GM10248 (cell line): ENCODE measurements at regions of chr2 and their contacts with region 1.

Region 1: DNA sequence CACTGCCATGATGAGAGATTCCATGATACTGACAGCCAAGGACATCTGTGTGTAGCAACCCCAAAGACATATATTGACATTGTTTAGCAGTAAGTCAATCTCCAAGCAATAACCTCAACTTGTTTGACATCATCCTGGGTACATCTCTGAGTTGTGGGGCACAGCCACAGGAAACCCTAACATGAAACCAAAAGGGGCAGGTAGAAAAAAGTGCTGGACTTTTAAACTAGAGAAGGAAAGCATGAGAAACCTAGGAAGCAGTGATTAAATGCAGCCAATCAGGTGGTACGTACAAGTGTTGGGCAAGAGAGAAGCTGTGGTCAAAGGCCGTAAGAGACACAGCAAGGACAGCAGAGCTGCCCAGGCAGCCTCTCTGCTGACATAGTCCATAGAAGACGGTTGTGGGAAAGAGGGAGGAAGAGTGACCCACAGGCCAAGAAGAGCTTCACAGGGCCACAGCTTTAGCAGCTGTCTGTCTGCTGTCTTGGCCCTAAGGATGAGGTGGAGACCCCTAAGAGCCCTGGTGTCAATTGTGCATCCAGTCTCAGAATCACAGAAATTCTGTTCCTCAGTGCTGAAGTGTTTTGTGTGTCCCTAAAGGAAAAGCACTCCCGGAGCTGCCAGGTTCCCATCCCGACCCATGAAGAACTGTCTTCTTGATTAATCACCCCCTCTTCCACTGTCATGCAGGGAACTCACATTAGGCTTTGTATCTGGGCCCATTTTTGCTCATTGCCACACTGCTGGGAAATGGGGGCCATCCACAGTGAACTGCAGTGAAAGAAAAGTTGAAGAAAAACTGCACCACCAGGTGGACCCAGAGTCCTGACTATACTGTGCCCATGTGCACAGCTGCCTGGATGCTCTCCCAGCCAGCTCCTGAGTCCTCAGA is 25.4 kb upstream of the CHN1 start:
- DNase-seq: no peak
- CTCF ChIP-seq: peak; percentile 43

Region 2: DNA sequence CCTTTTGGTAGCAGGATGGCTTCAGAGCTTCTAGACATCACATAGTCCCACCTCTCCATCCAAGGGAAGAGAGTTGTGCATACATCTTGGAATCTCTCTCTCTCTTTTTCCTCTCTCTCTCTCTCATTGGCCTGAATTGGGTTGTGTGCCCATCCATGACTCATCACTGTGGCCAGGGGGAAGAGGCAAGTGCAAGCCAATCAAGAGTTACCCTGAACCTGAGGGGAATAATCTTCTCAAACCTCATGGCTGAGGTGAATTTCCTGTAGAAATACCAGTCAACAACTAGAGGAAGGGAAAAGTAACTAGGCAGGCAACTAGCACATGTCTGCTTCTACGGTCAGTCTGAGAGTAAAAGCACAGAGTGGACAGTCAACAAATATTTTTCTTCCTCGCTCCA is 18.1 kb before region 1 on chr2:
- CTCF ChIA-PET with region 1: no interaction called
- POLR2A ChIA-PET with region 1: no interaction called
- DNase-seq: no peak
- CTCF ChIP-seq: no peak

Region 3: DNA sequence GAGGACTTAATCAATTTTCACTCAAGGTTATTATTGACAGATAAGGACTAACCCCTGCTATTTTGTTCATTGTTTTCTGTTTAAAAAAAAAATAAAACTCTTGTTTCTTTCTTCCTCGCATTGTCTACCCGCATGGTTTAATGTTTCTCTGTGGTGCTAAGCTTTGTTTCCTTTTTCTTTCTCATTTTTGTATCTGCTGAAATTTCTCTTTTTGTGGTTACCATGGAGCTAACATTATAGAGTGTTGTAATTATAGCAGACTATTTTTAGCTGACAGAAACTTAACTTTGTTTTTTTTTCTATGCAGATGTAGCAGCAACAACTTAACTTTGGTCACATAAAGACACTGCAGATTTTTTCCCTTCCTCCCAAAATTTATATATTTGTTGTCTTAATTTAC is 17.6 kb after region 1 on chr2:
- CTCF ChIA-PET with region 1: interaction called, 10 read pairs
- POLR2A ChIA-PET with region 1: no interaction called
- DNase-seq: no peak
- CTCF ChIP-seq: no peak

Region 4: GRCh38 chr2:175326801-175327200 is 296.2 kb after region 1 on chr2:
- CTCF ChIA-PET with region 1: interaction called, 13 read pairs
- POLR2A ChIA-PET with region 1: no interaction called
- DNase-seq: no peak
- CTCF ChIP-seq: no peak